ENCODE measurements at regions of chr7 and their contacts with region 1.

Region 1: DNA sequence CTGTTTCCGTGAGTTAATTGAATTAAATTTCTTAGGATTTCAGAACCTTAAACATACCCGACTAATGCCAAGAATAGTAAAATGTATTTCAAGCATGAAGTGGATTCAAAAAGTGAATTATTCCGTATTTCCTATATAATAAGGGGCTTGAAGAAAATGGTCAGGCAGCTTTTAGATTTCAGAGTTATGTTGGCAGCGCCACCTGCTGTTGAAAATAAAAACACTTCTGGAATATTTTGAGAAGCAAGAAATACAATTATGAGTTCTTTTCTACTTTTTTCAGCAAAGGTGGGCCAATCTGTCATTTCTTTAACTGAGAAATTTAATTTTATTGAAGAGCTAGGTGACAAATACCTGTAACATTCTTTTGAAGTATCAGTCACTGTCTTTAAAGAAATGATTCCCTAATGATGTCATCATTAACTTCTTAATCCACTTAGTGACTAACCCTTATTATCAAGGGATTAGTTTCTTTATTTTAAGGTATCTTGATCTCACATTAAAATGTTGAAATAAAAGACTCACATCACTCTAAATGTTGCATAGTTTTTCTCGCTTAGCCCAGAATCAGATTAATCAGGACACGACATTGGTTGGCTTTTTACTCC is 36.6 kb upstream of the AGR3 start:
- DNase-seq: peak; percentile 64
- ATAC-seq: no peak
- H3K4me3 ChIP-seq: no peak overlapping the region
- H3K27ac ChIP-seq: no peak overlapping the region
- H3K4me1 ChIP-seq: peaks cover 11% of the 10 kb centered on the region
- H3K27me3 ChIP-seq: no peaks in the 10 kb centered on the region
- CTCF ChIP-seq: peak; percentile 69
- POLR2A ChIP-seq: no peak
- RAD21 ChIP-seq: peak; percentile 62

Region 2: DNA sequence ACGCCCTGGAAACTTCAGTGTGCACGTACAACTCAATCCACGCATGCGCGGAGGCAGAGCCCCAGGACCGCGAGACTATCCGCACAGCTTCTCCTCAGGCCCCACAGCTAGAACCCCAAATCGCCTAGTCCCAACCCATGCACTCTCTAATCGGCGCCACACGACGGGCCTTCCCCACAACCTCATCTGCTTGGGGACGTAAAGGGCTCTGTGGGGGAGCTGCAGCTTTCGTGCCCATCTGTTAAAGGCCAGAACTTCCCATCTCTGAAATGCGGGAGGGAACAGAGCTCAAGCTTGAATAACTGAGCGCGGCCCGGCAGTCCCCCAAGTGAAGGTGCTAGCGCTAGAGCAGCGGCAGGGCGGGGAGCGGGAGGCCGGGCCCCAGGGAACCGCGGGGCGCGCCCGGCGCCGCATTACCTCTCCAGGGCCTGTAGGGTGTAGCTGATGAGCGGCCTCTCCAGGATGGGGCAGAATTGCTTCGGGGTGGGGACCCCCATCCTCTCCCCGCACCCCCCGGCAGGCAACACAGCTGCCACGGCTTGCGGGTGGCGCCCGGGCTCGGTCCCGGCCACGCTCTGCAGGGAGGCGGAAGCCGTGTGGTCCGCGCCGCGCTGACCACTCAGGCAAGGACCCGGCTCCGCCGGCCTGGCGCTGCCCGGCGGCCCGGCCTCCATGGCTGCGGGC is 497.6 kb before region 1 on chr7:
- CTCF ChIA-PET with region 1: no interaction called
- POLR2A ChIA-PET with region 1: no interaction called
- dilution Hi-C with region 1: no loop called
- in situ Hi-C with region 1: no loop called
- intact Hi-C with region 1: loop called (anchors 10 kb)
- DNase-seq: peak; percentile 82
- ATAC-seq: peak; percentile 81
- H3K4me3 ChIP-seq: peak overlapping the region; percentile 42
- H3K27ac ChIP-seq: peak overlapping the region; percentile 95
- H3K4me1 ChIP-seq: peaks cover 11% of the 10 kb centered on the region
- H3K27me3 ChIP-seq: no peaks in the 10 kb centered on the region
- CTCF ChIP-seq: no peak; the same call in 1 of the 2 replicates
- POLR2A ChIP-seq: no peak
- RAD21 ChIP-seq: no peak

Region 3: DNA sequence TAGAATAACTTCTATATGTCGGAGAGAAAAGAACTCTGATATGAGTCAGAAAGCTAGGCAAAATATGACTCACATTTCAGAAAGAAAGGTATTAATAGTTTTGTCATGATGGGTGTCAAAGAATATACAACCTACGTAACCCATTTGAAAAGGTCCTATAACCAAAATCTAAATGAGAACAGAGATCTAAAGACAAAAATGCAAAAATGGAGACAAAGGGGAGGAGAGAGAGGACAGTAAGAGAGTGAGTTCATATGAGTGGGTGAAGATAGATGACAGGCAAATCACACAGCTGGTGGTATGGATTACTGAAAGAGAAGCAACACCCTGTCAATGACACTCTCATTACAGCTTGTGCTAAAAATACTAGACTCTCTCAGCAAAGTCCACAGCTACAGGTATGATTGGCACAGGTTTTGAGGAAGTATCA is 298.4 kb before region 1 on chr7:
- CTCF ChIA-PET with region 1: no interaction called
- POLR2A ChIA-PET with region 1: no interaction called
- dilution Hi-C with region 1: no loop called
- in situ Hi-C with region 1: loop called (anchors 25 kb)
- intact Hi-C with region 1: no loop called
- DNase-seq: peak; percentile 41
- ATAC-seq: peak; percentile 42; the same call in 1 of the 2 replicates
- H3K4me3 ChIP-seq: no peak overlapping the region
- H3K27ac ChIP-seq: no peak overlapping the region
- H3K4me1 ChIP-seq: peaks cover 5% of the 10 kb centered on the region
- H3K27me3 ChIP-seq: no peaks in the 10 kb centered on the region
- CTCF ChIP-seq: no peak
- POLR2A ChIP-seq: no peak
- RAD21 ChIP-seq: no peak

Region 4: DNA sequence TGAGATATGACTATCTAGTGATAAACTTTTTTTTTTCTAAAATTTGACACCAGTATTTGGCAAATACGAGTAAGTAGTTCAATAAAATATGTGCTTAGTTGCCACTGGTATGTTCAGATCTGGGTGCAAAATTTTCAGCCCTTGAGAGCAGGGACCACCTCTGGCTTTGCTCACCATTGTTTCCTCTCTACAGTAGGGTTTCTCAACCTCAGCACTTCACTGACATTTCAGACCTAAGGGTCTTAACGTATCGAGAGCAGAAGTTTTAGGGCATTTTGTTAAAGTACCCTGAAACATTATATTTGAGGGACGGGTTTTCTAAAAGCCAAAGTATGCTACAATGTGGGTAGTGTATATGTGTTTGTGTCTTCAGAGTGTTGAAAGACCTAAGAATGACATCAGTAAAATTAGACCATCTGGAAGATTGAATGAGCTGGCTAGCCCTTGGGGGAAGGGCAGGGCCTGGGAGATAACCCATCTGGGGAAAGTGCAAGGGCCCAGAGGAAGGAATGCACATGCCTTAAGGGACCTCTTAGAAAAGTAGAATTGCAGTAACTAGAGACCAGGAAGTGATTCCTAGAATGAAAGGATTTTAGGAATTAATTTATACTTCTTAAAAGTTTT is 260.6 kb before region 1 on chr7:
- CTCF ChIA-PET with region 1: no interaction called
- POLR2A ChIA-PET with region 1: no interaction called
- dilution Hi-C with region 1: no loop called
- in situ Hi-C with region 1: no loop called
- intact Hi-C with region 1: no loop called
- DNase-seq: peak; percentile 94
- ATAC-seq: peak; percentile 94
- H3K4me3 ChIP-seq: no peak overlapping the region
- H3K27ac ChIP-seq: peak overlapping the region; percentile 99
- H3K4me1 ChIP-seq: peaks cover 4% of the 10 kb centered on the region
- H3K27me3 ChIP-seq: no peaks in the 10 kb centered on the region
- CTCF ChIP-seq: peak; percentile 42
- POLR2A ChIP-seq: no peak
- RAD21 ChIP-seq: no peak; the same call in 1 of the 2 replicates

Region 5: GRCh38 chr7:16695621-16696237 is 222.7 kb before region 1 on chr7:
- CTCF ChIA-PET with region 1: no interaction called
- POLR2A ChIA-PET with region 1: no interaction called
- dilution Hi-C with region 1: no loop called
- in situ Hi-C with region 1: loop called (anchors 10 kb)
- intact Hi-C with region 1: loop called (anchors 1 kb)
- DNase-seq: peak; percentile 73
- ATAC-seq: peak; percentile 76; the same call in 1 of the 2 replicates
- H3K4me3 ChIP-seq: no peak overlapping the region
- H3K27ac ChIP-seq: no peak overlapping the region
- H3K4me1 ChIP-seq: peaks cover 6% of the 10 kb centered on the region; the same call in 1 of the 2 replicates
- H3K27me3 ChIP-seq: no peaks in the 10 kb centered on the region
- CTCF ChIP-seq: peak; percentile 51
- POLR2A ChIP-seq: no peak
- RAD21 ChIP-seq: peak; percentile 61

Region 6: DNA sequence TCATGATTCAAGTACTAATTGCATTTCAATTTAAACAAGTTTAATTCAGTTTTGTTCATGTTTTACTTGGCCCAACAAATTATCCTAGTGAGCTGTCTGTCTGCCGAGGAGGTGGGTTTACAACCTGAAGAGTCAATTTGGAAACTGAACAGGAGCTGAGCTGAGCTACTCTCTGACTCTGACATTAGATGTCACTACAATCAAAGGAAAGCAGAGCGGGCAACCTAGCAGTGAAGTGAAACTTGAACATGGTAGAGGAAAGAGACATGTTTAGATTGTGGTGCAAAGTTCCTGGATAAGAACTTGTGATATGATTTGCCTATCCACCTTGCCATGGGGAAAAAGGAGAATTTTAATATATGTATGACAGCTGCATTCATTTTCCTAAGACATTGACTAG is 27.1 kb before region 1 on chr7:
- CTCF ChIA-PET with region 1: interaction called, 13 read pairs
- POLR2A ChIA-PET with region 1: no interaction called
- dilution Hi-C with region 1: no loop called
- in situ Hi-C with region 1: no loop called
- intact Hi-C with region 1: loop called (anchors 1 kb)
- DNase-seq: peak; percentile 72
- ATAC-seq: peak; percentile 92
- H3K4me3 ChIP-seq: no peak overlapping the region
- H3K27ac ChIP-seq: no peak overlapping the region
- H3K4me1 ChIP-seq: no peaks in the 10 kb centered on the region
- H3K27me3 ChIP-seq: no peaks in the 10 kb centered on the region
- CTCF ChIP-seq: peak; percentile 80
- POLR2A ChIP-seq: no peak
- RAD21 ChIP-seq: peak; percentile 95

Region 7: DNA sequence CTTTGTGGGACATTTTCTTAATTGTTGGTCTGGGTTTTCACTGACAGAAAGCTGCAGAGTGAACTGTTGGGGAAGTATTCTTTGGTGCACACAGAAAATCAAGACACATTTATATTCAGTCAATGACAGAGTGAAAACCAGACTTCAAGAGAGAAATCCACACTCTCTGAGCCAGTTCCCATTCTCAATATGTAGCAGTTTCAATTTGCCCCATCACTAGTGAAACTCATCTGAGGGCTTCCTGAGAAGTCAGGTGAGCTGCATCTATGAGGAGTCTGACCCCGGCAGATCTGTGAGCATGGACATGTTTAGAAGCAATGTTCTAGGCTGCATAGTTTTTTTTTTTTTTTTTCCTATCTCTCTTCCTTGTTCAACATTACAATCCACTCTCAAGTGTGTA is 216.4 kb after region 1 on chr7:
- CTCF ChIA-PET with region 1: no interaction called
- POLR2A ChIA-PET with region 1: no interaction called
- dilution Hi-C with region 1: no loop called
- in situ Hi-C with region 1: no loop called
- intact Hi-C with region 1: no loop called
- DNase-seq: no peak
- ATAC-seq: no peak
- H3K4me3 ChIP-seq: no peak overlapping the region
- H3K27ac ChIP-seq: no peak overlapping the region
- H3K4me1 ChIP-seq: no peaks in the 10 kb centered on the region; the same call in 1 of the 2 replicates
- H3K27me3 ChIP-seq: no peaks in the 10 kb centered on the region
- CTCF ChIP-seq: no peak
- POLR2A ChIP-seq: no peak
- RAD21 ChIP-seq: no peak

Region 8: GRCh38 chr7:18345641-18346234 is 1427.3 kb after region 1 on chr7:
- CTCF ChIA-PET with region 1: no interaction called
- POLR2A ChIA-PET with region 1: no interaction called
- dilution Hi-C with region 1: no loop called
- in situ Hi-C with region 1: loop called (anchors 25 kb)
- intact Hi-C with region 1: no loop called
- DNase-seq: peak; percentile 46
- ATAC-seq: peak; percentile 49; the same call in 1 of the 2 replicates
- H3K4me3 ChIP-seq: no peak overlapping the region
- H3K27ac ChIP-seq: no peak overlapping the region
- H3K4me1 ChIP-seq: no peaks in the 10 kb centered on the region
- H3K27me3 ChIP-seq: no peaks in the 10 kb centered on the region
- CTCF ChIP-seq: peak; percentile 78
- POLR2A ChIP-seq: no peak
- RAD21 ChIP-seq: peak; percentile 73